ENCODE measurements at regions of chr3 and their contacts with region 1.

Region 1: GRCh38 chr3:192906949-192907348 is 10.7 kb downstream of the MB21D2 start:
- DNase-seq: no peak

Region 2: GRCh38 chr3:192795021-192795420 is 111.9 kb before region 1 on chr3:
- intact Hi-C with region 1: no loop called
- DNase-seq: no peak

Region 3: GRCh38 chr3:192929755-192930547 is 23.0 kb after region 1 on chr3:
- intact Hi-C with region 1: no loop called
- DNase-seq: no peak

Region 4: GRCh38 chr3:194450341-194450740 is 1543.4 kb after region 1 on chr3:
- intact Hi-C with region 1: loop called in 1 of 2 experiments (anchors 5 kb)
- DNase-seq: no peak

Measured in posterior vena cava (tissue), 2 donors.